GM18951 (cell line): ENCODE measurements at regions of chr2 and their contacts with region 1.

Region 1: DNA sequence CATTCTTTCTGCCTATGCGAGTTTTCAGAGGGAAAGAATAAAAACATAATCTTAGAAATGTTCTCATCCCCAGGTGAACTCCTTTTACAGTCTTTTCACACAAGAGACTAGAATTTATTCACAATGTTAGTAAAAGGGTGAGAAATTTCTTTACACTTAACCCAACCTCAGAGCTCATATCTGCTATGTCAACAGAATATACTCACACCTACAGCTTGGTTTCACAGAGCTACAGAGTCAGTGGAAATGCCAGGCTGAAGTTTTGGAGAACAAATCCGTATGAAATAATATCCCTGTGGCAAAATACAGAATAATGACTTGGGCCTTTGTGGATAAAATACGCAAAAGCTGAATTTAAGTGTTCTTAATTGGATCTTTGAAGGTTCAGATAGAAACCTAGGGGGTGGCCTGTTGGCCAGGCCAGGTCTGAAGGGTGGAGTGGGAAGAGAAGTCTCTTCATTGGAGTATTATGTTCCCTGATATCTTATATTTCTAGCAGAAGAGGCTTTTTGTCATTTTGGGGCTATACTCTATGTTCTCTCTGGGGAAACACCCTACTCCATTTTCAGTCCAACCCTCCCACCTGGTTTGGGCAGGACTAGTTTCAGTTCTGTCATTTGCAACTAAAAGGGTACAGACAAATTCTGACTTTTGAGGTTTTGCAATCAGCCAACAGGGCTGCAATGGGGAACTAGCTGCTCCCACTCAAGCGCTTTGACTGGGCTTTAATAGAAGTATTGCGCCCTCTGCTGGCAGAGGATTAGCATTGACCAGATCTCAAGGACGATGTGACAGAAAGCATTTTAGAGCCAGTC is 25.7 kb downstream of the FBXO48 start:
- POLR2A ChIP-seq: no peak

Region 2: DNA sequence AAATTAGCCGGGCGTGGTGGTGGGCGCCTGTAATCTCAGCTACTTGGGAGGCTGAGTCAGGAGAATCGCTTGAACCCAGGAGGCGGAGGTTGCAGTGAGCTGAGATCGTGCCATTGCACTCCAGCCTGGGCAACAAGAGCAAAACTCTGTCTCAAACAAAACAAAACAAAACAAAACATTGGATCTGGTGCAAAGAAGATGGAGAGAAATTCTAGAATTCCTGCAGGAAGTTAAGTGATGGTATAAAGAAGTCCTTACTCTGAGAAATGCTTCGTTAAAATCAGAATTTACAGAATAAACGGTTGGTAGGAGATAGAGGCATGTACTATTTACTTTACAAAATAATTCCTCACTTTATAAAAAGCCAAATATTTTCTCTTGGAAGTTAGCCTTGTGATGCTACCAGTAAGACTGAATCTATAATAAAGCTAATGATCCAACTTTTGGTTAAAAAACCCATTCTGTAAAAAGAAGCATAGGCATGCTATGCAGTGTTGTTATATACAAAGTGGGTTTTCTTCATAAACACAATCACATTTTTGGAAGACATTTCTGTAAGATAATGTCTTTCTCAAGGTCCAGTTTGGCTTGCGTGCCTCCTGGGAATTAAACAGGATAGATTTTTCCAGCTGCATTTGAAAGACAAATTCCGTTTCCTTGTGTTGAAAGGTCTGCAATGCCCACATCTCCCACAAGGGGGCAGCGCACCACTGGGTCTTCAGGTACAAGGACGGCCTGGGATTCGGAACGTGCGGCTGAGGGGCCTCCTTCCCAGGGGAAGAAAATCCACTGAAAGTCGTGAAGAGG is 319.3 kb before region 1 on chr2:
- in situ Hi-C with region 1: loop called (anchors 10 kb)
- POLR2A ChIP-seq: no peak

Region 3: DNA sequence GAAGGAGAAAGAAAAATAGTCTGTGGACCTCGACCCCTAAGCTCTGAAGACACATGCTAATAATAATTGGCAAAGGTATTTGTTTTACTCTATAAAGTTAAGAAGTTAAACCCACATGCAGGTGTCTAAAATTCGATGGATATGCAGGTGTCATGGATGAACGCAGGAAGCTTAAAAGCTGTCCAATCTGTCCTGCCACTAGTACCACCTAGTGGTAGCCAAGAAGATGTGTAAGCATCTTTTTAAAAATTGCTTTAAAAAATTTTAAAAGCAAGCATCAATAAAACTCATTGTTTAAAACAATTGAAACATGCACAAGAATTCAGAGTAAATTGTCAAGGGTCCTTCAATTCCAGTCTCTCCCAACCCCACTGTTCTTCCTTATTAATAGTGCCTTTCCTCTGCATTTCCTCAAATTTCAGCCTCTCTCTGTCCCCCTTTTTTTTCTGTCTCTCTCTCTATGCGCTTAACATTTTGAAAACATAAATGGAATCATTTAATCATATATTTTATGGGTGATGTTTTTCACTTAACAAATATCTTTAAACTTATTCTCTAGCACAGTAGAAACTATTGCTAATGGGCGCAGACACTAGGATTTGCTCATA is 158.5 kb before region 1 on chr2:
- in situ Hi-C with region 1: loop called (anchors 10 kb)
- POLR2A ChIP-seq: no peak